Colonic mucosa (tissue), 4 donors: ENCODE measurements at regions of chr17 and their contacts with region 1.

Region 1: GRCh38 chr17:65055348-65056261 is 935 bp downstream of the GNA13 start:
- DNase-seq: peak; percentile 68
- H3K4me3 ChIP-seq: peak overlapping the region; percentile 76
- H3K27ac ChIP-seq: peak overlapping the region; percentile 97
- H3K4me1 ChIP-seq: no peaks in the 10 kb centered on the region
- H3K27me3 ChIP-seq: no peaks in the 10 kb centered on the region
- CTCF ChIP-seq: no peak

Region 2: GRCh38 chr17:64975329-64976087 is 80.1 kb before region 1 on chr17:
- intact Hi-C with region 1: loop called (anchors 10 kb)
- DNase-seq: peak; percentile 96
- H3K4me3 ChIP-seq: peak overlapping the region; percentile 77
- H3K27ac ChIP-seq: peak overlapping the region; percentile 97
- H3K4me1 ChIP-seq: no peaks in the 10 kb centered on the region
- H3K27me3 ChIP-seq: no peaks in the 10 kb centered on the region
- CTCF ChIP-seq: no peak

Region 3: DNA sequence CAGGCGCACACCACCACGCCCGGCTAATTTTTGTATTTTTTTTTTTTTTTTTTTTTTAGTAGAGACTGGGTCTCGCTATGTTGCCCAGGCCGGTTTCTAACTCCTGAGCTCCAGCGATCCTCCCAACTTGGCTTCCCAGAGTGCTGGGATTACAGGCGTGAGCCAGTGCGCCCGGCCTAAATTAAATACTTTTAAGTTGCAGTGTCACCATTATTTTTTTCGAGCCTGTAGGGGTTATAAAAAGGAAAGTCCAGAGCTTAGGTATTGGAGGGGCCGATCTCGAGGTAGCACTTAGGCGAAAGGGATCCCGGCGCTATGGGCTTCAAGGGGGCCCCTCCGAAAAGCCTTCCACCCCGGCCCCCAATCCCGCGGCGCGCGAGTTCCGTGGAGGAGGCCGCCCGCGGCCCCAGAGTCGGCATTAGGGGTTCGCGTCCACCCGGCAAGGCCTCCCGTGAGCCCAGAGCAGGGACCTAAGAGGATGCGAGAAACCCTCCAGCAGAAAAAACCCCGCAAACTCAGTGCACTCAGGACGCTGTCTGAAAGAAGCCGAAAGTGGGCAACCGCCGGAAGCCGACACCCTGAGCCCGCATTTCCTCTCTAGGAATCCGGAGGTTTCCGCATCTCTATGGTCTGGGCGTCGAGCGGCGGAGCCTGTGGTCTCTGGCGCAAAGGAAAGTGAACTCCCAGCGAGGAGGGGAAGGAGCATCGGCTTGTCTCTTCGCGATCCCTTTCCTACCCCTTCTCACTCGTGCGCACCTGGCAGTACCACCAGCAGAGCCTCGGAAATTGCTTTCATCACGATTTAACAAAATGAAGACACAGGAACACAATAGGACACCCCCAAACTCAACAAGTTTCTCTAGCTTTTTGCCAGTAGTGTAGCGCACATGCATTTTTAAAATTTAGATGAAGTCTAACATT is 67.5 kb after region 1 on chr17:
- intact Hi-C with region 1: no loop called
- DNase-seq: peak; percentile 90
- H3K4me3 ChIP-seq: peak overlapping the region; percentile 67
- H3K27ac ChIP-seq: peak overlapping the region; percentile 90
- H3K4me1 ChIP-seq: no peaks in the 10 kb centered on the region
- H3K27me3 ChIP-seq: no peaks in the 10 kb centered on the region
- CTCF ChIP-seq: no peak